ENCODE measurements at regions of chr3 and their contacts with region 1.

Region 1: GRCh38 chr3:193665370-193665989 is 72.5 kb downstream of the OPA1 start:
- DNase-seq: no peak
- H3K4me3 ChIP-seq: no peak overlapping the region
- H3K27ac ChIP-seq: no peak overlapping the region
- H3K4me1 ChIP-seq: no peaks in the 10 kb centered on the region
- H3K27me3 ChIP-seq: no peaks in the 10 kb centered on the region
- CTCF ChIP-seq: peak in 3 of 4 experiments; percentile 34 to 52 (median 49)
- POLR2A ChIP-seq: no peak

Region 2: DNA sequence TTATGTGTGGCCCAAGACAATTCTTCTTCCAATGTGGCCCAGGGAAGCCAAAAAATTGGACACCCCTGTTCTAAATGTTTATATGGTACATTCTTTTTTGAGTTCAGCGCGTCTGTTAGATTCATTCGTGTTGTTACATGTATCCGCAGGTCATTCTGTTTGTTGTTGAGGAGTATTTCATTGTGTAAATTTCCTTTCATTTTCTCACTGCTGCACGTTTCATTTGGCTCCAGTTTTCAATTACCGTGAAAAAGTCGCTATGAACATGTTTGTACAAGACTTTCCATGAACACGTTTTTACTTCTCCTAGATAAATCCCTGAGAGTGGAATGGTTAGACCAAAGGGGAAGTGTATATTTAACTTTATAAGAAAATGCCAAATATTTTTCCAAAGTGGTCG is 80.0 kb before region 1 on chr3:
- intact Hi-C with region 1: no loop called
- DNase-seq: no peak
- H3K4me3 ChIP-seq: no peak overlapping the region
- H3K27ac ChIP-seq: no peak overlapping the region
- H3K4me1 ChIP-seq: no peaks in the 10 kb centered on the region
- H3K27me3 ChIP-seq: no peaks in the 10 kb centered on the region
- CTCF ChIP-seq: no peak
- POLR2A ChIP-seq: no peak

Region 3: DNA sequence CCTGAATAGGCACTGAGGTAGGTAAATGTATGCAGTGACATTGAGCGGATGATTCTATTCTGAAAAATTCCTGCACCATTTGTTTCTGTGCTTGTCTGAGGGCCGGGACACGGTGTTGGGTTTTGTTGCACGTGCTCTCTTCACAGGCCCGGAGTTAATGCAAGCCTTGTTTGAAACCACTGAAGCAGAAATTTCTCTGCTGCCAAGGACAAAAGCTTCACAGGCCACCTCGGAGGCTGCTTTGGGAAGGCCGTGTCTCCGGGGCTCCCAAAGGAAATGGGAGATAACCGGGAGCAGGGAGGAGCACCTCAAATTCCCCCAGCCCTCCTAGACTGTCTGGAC is 106.9 kb after region 1 on chr3:
- intact Hi-C with region 1: loop called (anchors 10 kb)
- DNase-seq: peak; percentile 3
- H3K4me3 ChIP-seq: no peak overlapping the region
- H3K27ac ChIP-seq: no peak overlapping the region
- H3K4me1 ChIP-seq: no peaks in the 10 kb centered on the region
- H3K27me3 ChIP-seq: no peaks in the 10 kb centered on the region
- CTCF ChIP-seq: no peak
- POLR2A ChIP-seq: no peak

Region 4: DNA sequence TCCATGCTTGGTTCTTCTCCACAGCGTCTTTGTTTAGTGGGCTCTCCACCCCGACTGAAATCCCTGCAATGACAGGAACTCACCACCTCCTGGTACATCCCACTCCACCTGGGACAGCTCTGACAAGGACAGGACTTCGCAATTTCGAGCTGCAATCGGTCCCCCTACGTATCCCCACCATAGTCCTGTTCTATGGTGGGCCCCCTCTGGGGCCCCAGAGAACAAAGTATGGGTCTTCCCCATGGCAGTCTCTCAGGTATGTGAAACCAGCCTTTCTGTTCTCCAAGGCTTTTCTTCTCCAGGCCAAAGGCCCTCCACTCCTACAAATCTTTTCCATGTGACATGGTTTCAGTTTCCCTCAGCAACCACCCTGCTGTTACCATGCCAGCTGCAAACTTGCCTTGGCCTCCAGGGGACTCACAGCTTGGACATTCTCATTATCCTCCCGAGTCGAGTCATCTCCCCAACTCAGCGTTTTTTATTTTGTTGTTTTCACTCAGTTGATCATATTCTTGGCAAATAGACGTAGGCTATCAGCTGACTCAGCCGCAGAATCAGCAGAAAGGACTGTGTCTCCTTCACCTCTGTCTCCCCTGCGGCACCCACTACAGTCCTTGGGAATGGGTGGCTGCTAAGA is 160.8 kb after region 1 on chr3:
- intact Hi-C with region 1: no loop called
- DNase-seq: no peak
- H3K4me3 ChIP-seq: no peak overlapping the region
- H3K27ac ChIP-seq: no peak overlapping the region
- H3K4me1 ChIP-seq: peaks cover 5% of the 10 kb centered on the region
- H3K27me3 ChIP-seq: no peaks in the 10 kb centered on the region
- CTCF ChIP-seq: no peak
- POLR2A ChIP-seq: no peak

Region 5: DNA sequence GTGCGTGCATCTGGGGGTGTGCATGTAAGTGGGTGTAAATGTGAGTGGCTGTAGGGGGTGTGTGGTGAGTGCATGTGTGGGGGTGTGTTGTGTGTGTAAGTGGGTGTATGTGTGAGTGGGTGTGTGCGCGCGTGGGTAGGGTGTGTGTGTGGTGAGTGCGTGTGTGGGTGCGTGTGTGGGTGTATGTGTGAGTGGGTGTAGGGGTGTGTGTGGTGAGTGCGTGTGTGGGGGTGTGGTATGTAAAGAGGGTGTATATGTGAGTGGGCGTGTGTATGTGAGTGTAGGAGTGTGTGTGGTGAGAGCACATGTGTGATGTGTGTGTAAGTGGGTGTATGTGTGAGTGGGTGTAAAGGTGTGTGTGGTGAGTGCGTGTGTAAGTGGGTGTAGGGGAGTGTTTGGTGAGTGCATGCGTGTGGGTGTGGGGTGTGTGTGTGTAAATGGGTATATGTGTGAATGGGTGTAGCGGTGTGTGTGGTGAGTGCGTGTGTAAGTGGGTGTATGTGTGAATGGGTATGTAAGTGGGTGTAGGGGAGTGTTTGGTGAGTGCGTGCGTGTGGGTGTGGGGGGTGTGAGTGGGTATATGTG is 686.6 kb after region 1 on chr3:
- intact Hi-C with region 1: loop called (anchors 10 kb)
- DNase-seq: no peak
- H3K4me3 ChIP-seq: no peak overlapping the region
- H3K27ac ChIP-seq: no peak overlapping the region
- H3K4me1 ChIP-seq: no peaks in the 10 kb centered on the region
- H3K27me3 ChIP-seq: no peaks in the 10 kb centered on the region
- CTCF ChIP-seq: no peak
- POLR2A ChIP-seq: no peak

Measured in prostate gland (tissue), 2 donors.